ENCODE measurements at regions of chr2 and their contacts with region 1.

Region 1: GRCh38 chr2:231854671-231855070 is 68.4 kb downstream of the COPS7B start:
- DNase-seq: no peak
- H3K4me3 ChIP-seq: no peak overlapping the region
- H3K27ac ChIP-seq: no peak overlapping the region
- H3K4me1 ChIP-seq: no peaks in the 10 kb centered on the region
- H3K27me3 ChIP-seq: no peaks in the 10 kb centered on the region
- CTCF ChIP-seq: no peak
- POLR2A ChIP-seq: no peak

Region 2: GRCh38 chr2:231541645-231542044 is 313.0 kb before region 1 on chr2:
- intact Hi-C with region 1: no loop called
- DNase-seq: no peak
- H3K4me3 ChIP-seq: no peak overlapping the region
- H3K27ac ChIP-seq: peak overlapping the region in 1 of 3 donors; percentile 26
- H3K4me1 ChIP-seq: no peaks in the 10 kb centered on the region
- H3K27me3 ChIP-seq: no peaks in the 10 kb centered on the region
- CTCF ChIP-seq: no peak
- POLR2A ChIP-seq: no peak

Region 3: DNA sequence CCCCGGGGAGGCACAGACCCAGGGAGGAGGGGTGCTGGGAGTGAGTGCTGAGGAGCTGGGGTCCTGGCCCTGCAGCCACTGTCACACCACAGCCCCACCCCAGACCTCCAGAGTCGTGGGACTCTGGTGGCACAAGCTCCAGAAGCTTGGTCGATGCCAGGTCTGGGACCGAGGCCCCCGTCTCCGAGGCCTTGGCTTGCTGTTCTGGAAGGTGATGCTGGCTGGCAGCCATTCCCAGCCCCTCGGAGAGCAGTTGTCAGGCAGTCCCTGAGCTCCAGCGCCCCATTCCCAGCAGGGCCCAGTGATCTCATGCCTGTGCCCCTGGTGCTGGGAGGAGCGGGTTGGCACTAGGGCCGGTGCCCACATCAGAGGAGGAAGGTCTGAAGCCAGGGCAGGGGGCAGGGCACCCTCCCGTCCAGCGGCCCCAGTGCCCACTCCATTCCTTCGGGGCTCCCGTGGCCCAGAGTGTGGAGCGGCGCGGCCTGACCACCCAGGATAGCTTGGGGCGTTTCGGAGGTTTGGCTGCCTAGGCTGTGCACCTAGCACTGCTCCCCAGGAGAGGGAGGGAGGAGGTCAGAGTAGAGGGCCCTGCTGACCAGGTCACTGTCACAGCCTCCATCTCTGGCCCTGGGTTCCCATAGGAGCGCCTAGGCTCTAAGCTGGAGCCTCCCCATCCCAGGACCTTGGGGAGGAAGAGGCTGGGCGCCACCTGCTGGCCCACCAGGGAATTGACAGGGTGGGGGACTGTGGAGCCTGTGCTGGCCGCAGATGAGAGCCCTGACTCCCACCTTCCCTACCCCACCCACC is 584.5 kb after region 1 on chr2:
- intact Hi-C with region 1: loop called (anchors 5 kb)
- DNase-seq: peak; percentile 23 to 35
- H3K4me3 ChIP-seq: no peak overlapping the region
- H3K27ac ChIP-seq: no peak overlapping the region
- H3K4me1 ChIP-seq: peaks cover 0 to 6% of the 10 kb centered on the region in 2 donors
- H3K27me3 ChIP-seq: no peaks in the 10 kb centered on the region
- CTCF ChIP-seq: peak in 4 of 6 experiments; percentile 23 to 68 (median 30)
- POLR2A ChIP-seq: no peak

Measured in thyroid gland (tissue), 4 donors.